ENCODE measurements at regions of chr20 and their contacts with region 1.

Region 1: DNA sequence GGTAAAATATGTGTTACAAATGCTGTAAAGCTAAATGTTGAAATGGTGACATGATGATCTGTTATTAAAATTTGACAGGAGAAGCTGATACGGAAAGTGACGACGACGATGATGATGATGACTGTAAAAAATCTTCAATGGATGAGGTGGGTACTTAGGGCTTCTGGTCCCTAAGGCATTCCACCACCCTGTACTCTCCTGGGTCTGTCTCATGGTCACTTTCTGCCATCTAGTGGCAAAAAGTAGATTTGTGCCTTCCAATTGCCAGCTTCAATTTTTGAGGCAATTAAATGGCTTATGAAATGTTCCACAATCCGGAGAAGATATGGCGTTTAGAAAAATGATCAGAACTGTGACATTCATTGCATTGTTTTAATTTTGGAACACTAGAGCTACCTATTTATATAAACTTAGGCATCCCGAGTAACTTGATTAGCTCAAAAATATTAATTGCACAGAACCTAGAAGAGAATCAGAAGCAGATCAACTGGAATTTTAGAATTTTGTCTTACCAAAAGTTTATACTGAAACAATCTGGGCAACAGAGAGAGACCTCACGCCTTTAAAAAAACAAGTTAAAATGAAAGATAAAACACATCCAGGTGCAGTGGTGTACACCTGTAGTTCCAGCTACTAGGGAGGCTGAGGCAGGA is 346.5 kb upstream of the PLCB4 start:
- DNase-seq: no peak
- ATAC-seq: no peak
- H3K4me3 ChIP-seq: no peak overlapping the region
- H3K27ac ChIP-seq: no peak overlapping the region
- H3K4me1 ChIP-seq: no peaks in the 10 kb centered on the region
- H3K27me3 ChIP-seq: no peaks in the 10 kb centered on the region

Region 2: GRCh38 chr20:7935027-7935551 is 787.3 kb before region 1 on chr20:
- intact Hi-C with region 1: loop called in 1 of 2 experiments (anchors 10 kb)
- DNase-seq: no peak
- ATAC-seq: no peak
- H3K4me3 ChIP-seq: no peak overlapping the region
- H3K27ac ChIP-seq: no peak overlapping the region
- H3K4me1 ChIP-seq: no peaks in the 10 kb centered on the region
- H3K27me3 ChIP-seq: no peaks in the 10 kb centered on the region

Region 3: DNA sequence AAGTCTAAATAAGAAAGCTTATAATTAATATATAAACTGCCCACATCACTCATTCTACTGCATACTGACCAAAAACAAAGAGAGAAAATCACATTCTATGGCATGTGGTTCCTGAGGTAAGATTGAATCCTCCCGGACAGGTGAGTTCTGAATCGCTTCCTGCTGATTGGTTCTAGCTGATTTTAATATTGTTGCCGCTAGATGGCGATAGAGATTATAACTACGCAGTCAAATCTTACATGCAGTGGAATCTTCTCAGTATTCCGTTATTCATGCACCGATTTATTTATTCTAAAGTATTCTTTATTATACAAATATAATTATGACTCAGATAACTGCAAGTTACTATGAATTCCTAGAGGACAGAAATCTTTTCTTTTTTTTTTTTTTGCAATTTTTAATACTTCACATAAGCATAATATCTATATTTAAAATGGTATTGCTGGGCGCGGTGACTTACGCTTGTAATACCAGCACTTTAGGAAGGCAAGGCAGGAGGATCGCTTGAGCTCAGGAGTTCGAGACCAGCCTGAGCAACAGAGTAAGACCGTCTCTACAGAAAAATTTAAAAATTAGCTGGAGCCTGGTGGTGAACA is 678.6 kb before region 1 on chr20:
- intact Hi-C with region 1: loop called (anchors 5 kb)
- DNase-seq: no peak
- ATAC-seq: peak; percentile 71
- H3K4me3 ChIP-seq: no peak overlapping the region
- H3K27ac ChIP-seq: no peak overlapping the region
- H3K4me1 ChIP-seq: no peaks in the 10 kb centered on the region
- H3K27me3 ChIP-seq: no peaks in the 10 kb centered on the region

Region 4: GRCh38 chr20:8131598-8132483 is 590.6 kb before region 1 on chr20 and contains the start of gene PLCB1:
- intact Hi-C with region 1: loop called in 1 of 2 experiments (anchors 10 kb)
- DNase-seq: peak; percentile 83 to 93
- ATAC-seq: peak; percentile 96
- H3K4me3 ChIP-seq: peak within 1 kb of the TSS; percentile 31
- H3K27ac ChIP-seq: no peak within 1 kb of the TSS
- H3K4me1 ChIP-seq: no peaks in the 10 kb centered on the region
- H3K27me3 ChIP-seq: no peaks in the 10 kb centered on the region
- total RNA-seq, gene PLCB1: 10.7 to 35.0 TPM

Region 5: DNA sequence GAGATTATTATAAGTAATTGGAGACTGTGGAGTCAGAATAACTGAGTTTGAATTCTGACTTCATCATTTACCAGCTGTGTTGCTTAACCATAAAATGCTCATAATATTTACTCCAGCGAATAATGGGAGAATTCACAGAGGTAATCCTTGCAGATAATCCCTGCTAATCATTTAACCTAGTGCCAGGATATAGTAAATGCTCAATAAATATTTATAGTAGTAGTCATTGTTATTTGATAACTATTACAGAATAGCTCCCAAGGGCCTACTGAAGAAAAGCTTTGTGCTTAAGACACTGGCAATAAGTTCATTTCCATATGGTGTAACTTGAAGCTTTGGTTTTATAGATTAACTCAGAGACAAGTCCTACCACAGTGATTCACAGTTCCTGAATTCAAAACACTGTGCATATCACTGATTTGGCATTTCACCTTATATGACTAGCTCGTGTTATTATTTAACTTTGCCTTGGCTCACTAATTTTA is 137.7 kb after region 1 on chr20:
- intact Hi-C with region 1: no loop called
- DNase-seq: no peak
- ATAC-seq: no peak
- H3K4me3 ChIP-seq: no peak overlapping the region
- H3K27ac ChIP-seq: no peak overlapping the region
- H3K4me1 ChIP-seq: peaks cover 0 to 1% of the 10 kb centered on the region in 2 donors
- H3K27me3 ChIP-seq: no peaks in the 10 kb centered on the region